Calu3 (cell line): ENCODE measurements at regions of chr17 and their contacts with region 1.

Region 1: GRCh38 chr17:44344939-44345453 is at the start of gene GRN:
- DNase-seq: peak; percentile 98
- H3K4me3 Mint-ChIP-seq: peak within 1 kb of the TSS; percentile 97
- H3K27ac Mint-ChIP-seq: peak within 1 kb of the TSS; percentile 93
- H3K4me1 Mint-ChIP-seq: peaks cover 11% of the 10 kb centered on the region
- H3K27me3 Mint-ChIP-seq: no peaks in the 10 kb centered on the region
- CTCF ChIP-seq: no peak
- total RNA-seq, gene GRN: 376 and 480 TPM in 2 replicates

Region 2: GRCh38 chr17:44199553-44200477 is 145.2 kb before region 1 on chr17 and contains the start of gene ATXN7L3:
- CTCF ChIA-PET with region 1: interaction called, 10 read pairs
- intact Hi-C with region 1: loop called (anchors 5 kb)
- DNase-seq: peak; percentile 100
- H3K4me3 Mint-ChIP-seq: peak within 1 kb of the TSS; percentile 90
- H3K27ac Mint-ChIP-seq: peak within 1 kb of the TSS; percentile 90
- H3K4me1 Mint-ChIP-seq: peaks cover 42% of the 10 kb centered on the region
- H3K27me3 Mint-ChIP-seq: no peaks in the 10 kb centered on the region
- CTCF ChIP-seq: no peak
- total RNA-seq, gene ATXN7L3: 93.1 and 112 TPM in 2 replicates

Region 3: DNA sequence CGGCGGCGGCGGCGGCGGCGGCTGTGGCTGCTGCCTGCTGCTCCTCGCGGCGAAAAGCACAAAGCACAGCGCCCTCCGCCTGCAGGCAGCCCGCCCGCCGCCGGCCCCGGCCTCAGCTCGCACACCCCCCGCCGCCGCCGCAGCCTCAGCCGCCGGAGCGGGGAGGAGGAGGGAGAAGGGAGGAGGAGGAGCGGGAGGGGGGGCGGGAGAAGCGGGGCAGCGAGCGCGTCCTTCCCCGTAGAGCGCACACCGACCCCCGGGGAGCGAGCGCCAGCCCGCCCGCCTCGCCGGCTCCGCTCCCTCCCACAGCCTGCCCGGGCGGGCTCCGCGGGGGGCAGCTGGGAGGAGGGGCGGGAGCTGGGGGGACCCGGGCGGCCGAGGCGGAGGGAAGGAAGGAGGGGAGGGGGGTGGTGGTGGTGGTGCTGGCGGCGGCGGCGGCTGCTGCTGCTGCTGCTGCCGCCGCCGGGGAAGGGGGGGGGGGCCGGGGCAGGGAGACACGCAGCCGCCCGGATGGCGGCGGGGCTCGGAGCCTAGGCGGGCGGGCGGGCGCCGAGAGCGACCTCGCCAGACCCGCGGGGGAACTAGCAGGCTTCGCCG is 125.3 kb before region 1 on chr17 and contains the start of gene UBTF:
- CTCF ChIA-PET with region 1: interaction called, 9 read pairs
- intact Hi-C with region 1: loop called (anchors 5 kb)
- DNase-seq: peak; percentile 83
- H3K4me3 Mint-ChIP-seq: peak within 1 kb of the TSS; percentile 86
- H3K27ac Mint-ChIP-seq: peak within 1 kb of the TSS; percentile 79
- H3K4me1 Mint-ChIP-seq: peaks cover 37% of the 10 kb centered on the region
- H3K27me3 Mint-ChIP-seq: no peaks in the 10 kb centered on the region
- CTCF ChIP-seq: no peak
- total RNA-seq, gene UBTF: 92.1 and 94.2 TPM in 2 replicates

Region 4: DNA sequence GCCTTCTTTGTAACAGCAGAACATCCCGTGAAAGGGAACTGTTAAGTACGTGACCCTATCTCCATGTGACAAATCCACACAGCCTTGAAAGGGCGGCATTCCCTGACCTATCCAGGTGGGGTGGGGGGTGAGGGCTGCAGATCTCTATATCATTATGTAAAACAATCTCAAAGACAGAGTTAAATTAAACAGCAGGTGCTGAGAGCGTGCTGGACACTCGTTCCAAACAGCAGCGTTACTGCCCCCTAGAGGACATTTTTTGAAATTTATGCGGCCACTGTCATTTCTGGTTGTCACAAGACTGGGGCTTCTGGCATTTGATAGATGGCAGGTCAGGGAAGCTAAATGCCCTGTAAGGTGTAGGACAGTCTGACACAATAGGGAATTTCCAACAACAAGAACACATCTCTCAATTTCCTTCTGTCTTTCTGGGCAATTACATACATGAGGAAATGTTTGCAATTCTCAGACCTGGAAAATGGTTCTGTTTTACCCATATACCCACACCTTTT is 13.7 kb before region 1 on chr17:
- CTCF ChIA-PET with region 1: interaction called, 10 read pairs
- intact Hi-C with region 1: no loop called
- DNase-seq: peak; percentile 91
- H3K4me3 Mint-ChIP-seq: no peak overlapping the region
- H3K27ac Mint-ChIP-seq: no peak overlapping the region
- H3K4me1 Mint-ChIP-seq: peaks cover 11% of the 10 kb centered on the region
- H3K27me3 Mint-ChIP-seq: no peaks in the 10 kb centered on the region
- CTCF ChIP-seq: peak; percentile 86

Region 5: DNA sequence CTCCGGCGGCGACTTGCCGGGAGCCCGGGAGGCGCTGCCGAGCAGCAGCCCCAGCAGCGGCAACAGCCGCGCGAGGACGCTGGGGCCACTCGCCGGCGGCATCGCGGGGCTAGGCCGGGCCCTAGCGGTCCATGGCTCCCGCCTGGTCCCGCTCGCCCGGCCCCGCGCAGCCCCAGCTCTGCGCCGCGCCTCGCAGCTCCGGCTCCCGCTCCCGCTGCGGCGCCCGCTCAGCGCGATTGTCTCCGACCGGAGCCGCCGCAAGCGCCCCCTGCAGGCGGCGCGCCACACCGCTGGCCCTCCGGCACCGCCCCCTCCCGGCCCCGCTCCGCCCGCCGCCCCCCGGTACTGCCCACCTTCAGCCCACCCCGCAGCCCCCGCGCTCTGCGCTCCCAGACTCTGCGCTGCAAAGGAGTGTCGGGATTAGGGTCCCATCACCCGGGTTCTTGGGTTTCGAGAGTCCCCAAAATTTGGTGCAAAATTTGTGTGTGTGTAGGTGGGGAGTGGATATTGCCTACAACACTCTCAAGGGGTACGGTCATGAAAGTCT is 18.7 kb after region 1 on chr17 and contains the start of gene FAM171A2:
- CTCF ChIA-PET with region 1: interaction called, 11 read pairs
- intact Hi-C with region 1: no loop called
- DNase-seq: peak; percentile 87
- H3K4me3 Mint-ChIP-seq: peak within 1 kb of the TSS; percentile 63
- H3K27ac Mint-ChIP-seq: no peak within 1 kb of the TSS
- H3K4me1 Mint-ChIP-seq: peaks cover 10% of the 10 kb centered on the region
- H3K27me3 Mint-ChIP-seq: peaks cover 87% of the 10 kb centered on the region
- CTCF ChIP-seq: peak; percentile 96
- total RNA-seq, gene FAM171A2: 0.95 and 2.0 TPM in 2 replicates